Naive thymus-derived CD8-positive, alpha-beta T cell (primary cell): ENCODE measurements at regions of chr17 and their contacts with region 1.

Region 1: GRCh38 chr17:69414408-69415274 is at the start of gene MAP2K6:
- DNase-seq: peak; percentile 67 to 89 (median 78)
- ATAC-seq: peak; percentile 97 to 98
- H3K4me3 Mint-ChIP-seq: peak within 1 kb of the TSS in 3 of 10 donors; percentile 5 to 49 (median 39)
- H3K27ac Mint-ChIP-seq: peak within 1 kb of the TSS in 1 of 10 donors; percentile 63
- H3K4me1 Mint-ChIP-seq: peaks cover 0 to 9% (median 8%) of the 10 kb centered on the region in 4 donors
- H3K27me3 Mint-ChIP-seq: no peaks in the 10 kb centered on the region
- polyA plus RNA-seq, gene MAP2K6: 15.2 to 18.9 (median 17.3) TPM

Region 2: GRCh38 chr17:69327060-69327831 is 87.4 kb before region 1 on chr17 and contains the start of gene ABCA5:
- POLR2A ChIA-PET with region 1: interaction called, 20 read pairs
- DNase-seq: peak; percentile 77 to 93 (median 87)
- ATAC-seq: peak; percentile 90 to 91
- H3K4me3 Mint-ChIP-seq: peak within 1 kb of the TSS; percentile 95 to 100 (median 97)
- H3K27ac Mint-ChIP-seq: peak within 1 kb of the TSS; percentile 96 to 99 (median 98)
- H3K4me1 Mint-ChIP-seq: peaks cover 16 to 43% (median 29%) of the 10 kb centered on the region in 4 donors
- H3K27me3 Mint-ChIP-seq: peaks cover 0 to 12% (median 0%) of the 10 kb centered on the region in 5 donors
- polyA plus RNA-seq, gene ABCA5: 6.0 to 6.6 (median 6.3) TPM

Region 3: GRCh38 chr17:69375229-69375628 is 39.4 kb before region 1 on chr17:
- POLR2A ChIA-PET with region 1: no interaction called
- DNase-seq: no peak
- ATAC-seq: no peak
- H3K4me3 Mint-ChIP-seq: peak overlapping the region in 1 of 10 donors; percentile 54
- H3K27ac Mint-ChIP-seq: peak overlapping the region in 1 of 10 donors; percentile 65
- H3K4me1 Mint-ChIP-seq: peaks cover 0 to 8% (median 4%) of the 10 kb centered on the region in 4 donors
- H3K27me3 Mint-ChIP-seq: peaks cover 0 to 16% (median 2%) of the 10 kb centered on the region in 5 donors